ENCODE measurements at regions of chr19 and their contacts with region 1.

Region 1: DNA sequence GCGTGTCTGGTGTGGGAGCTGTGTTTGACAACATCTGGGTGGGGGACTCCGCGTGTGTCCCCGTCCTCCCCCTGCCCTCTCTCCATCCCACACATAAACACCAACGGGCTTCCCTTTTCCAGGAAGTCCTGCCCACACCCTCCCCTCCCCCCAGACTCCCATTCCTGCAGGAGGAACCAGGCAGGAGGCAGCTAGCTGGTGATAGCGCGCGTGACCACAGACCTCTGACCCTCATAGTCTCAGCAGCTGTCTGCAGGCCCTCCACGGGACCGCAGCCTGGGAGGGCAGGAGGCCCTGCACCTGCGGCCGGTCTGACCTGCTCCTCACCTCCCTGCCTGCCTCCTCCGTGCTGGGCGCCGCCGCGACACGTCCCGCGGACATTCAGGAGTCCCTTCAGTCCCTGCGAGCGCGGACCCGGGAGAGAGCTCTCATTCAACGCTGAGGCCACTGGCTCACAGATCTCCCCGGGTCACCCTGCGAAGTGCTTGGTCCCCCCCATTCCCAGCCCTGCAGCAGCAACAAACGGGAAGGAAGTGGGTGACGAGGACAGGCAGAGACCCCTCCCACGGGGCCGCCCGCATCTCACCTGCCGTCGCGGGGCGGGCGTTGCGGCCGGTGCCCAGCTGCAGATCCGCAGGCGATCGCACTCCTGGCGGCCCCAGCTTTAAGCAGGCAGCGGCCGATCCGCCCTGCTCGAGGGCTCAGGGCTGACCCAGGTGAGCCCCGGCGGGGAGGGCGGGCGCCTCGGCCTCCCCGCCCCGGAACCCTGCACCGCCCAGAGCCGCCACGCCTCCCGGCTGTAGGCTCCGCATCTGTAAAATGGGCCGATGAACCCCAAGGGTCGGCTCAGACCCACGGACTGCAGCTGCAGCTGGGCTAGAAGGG is 1.1 kb upstream of the ACP5 start:
- DNase-seq: peak; percentile 55
- ATAC-seq: peak; percentile 73
- H3K4me3 Mint-ChIP-seq: peak overlapping the region; percentile 67
- H3K27ac Mint-ChIP-seq: no peak overlapping the region
- H3K4me1 Mint-ChIP-seq: peaks cover 8% of the 10 kb centered on the region
- H3K27me3 Mint-ChIP-seq: peaks cover 14% of the 10 kb centered on the region
- CTCF ChIP-seq: no peak

Region 2: GRCh38 chr19:11558881-11559828 is 19.3 kb before region 1 on chr19 and contains the start of gene ELOF1:
- CTCF ChIA-PET with region 1: interaction called, 15 read pairs
- POLR2A ChIA-PET with region 1: interaction called, 3 read pairs
- DNase-seq: peak; percentile 98
- ATAC-seq: peak; percentile 96
- H3K4me3 Mint-ChIP-seq: peak within 1 kb of the TSS; percentile 83
- H3K27ac Mint-ChIP-seq: peak within 1 kb of the TSS; percentile 90
- H3K4me1 Mint-ChIP-seq: peaks cover 16% of the 10 kb centered on the region
- H3K27me3 Mint-ChIP-seq: peaks cover 2% of the 10 kb centered on the region; the same call in 1 of the 2 replicates
- CTCF ChIP-seq: no peak
- total RNA-seq, gene ELOF1: 70.9 to 86.0 TPM (median 73.4 TPM) in 3 replicates

Measured in WTC11 (cell line).